ENCODE measurements at regions of chr19 and their contacts with region 1.

Region 1: DNA sequence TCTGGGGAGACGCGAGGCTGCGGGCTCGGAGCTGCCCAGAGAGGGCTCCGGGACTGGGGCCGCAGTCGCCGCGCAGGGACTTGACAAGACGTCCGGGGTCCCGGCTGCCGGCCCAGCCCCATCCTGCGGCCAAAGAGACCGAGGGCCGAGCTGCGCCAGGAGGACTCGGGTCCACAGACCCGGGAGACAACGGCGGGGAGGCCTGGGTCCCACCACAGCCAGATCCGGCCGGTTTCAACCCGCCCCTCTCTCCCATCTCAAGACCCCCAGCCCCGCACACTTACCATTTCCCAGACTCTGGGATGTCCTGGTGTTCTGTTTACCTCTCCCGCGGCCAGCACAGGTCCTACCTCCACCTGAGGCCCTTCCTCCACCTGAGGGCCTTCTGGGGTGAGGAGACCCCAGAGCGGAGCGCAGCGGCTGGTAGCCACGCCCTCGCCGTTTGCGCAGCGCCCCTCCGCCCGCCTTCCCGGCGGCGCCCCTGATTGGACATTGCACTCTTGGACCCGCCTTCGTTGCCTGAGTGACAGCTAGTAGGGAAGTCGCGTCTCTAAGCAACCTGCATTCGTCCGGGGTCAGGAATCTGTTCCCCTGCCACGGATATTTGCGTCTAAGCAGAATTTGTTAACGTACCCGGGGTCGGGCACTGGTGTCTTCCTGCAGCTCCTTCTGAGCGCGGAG is at the start of gene ZNF709:
- DNase-seq: peak; percentile 92
- ATAC-seq: peak; percentile 100
- H3K4me3 Mint-ChIP-seq: peak within 1 kb of the TSS; percentile 90
- H3K27ac Mint-ChIP-seq: peak within 1 kb of the TSS; percentile 86
- H3K4me1 Mint-ChIP-seq: peaks cover 25% of the 10 kb centered on the region
- H3K27me3 Mint-ChIP-seq: no peaks in the 10 kb centered on the region
- total RNA-seq, gene ZNF709: 1.4 to 1.9 TPM

Region 2: GRCh38 chr19:12346896-12347295 is 137.6 kb before region 1 on chr19:
- CTCF ChIA-PET with region 1: no interaction called
- DNase-seq: no peak
- ATAC-seq: no peak
- H3K4me3 Mint-ChIP-seq: no peak overlapping the region
- H3K27ac Mint-ChIP-seq: no peak overlapping the region
- H3K4me1 Mint-ChIP-seq: no peaks in the 10 kb centered on the region
- H3K27me3 Mint-ChIP-seq: no peaks in the 10 kb centered on the region

Region 3: DNA sequence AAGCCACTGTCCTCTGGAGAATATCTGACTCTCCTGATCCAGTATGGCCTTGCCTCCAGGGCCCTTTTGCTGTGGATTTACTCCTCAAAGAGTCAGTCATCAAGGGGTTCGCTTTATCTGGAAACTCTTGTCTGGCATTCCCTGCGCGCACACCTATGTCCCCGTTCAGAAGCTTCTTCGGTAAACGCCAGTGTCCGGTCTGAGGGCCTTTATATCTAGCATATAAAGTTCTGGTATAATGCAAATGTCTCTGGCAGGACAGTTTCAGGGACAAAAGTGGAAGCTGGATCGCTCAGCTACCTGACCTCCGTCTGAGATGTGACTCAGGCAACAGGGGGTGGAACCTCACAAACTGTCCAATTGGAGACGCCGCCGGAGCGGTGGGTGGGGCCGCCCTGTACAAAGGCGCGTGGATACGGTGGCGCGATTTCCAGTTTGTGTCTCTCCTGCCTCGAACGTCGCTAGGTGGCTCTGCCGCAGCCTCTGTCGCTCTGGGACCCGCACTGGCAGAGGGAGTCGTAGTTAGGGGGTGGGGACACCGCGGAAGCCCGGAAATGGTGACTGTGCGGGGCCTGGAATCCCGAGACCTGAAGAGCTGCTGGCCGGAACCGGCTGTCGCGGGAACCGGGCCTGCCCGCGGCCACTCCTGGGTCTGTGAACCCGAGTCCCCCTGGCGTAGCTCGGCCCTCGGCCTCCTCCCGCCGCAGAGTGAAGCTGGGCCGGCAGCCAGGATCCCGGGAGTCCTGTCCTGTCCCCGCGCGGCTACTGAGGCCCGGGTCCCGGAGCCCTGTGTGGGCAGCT is 10.7 kb after region 1 on chr19:
- CTCF ChIA-PET with region 1: interaction called, 10 read pairs
- DNase-seq: peak; percentile 96
- ATAC-seq: peak; percentile 100
- H3K4me3 Mint-ChIP-seq: peak overlapping the region; percentile 79
- H3K27ac Mint-ChIP-seq: peak overlapping the region; percentile 85
- H3K4me1 Mint-ChIP-seq: peaks cover 14% of the 10 kb centered on the region
- H3K27me3 Mint-ChIP-seq: no peaks in the 10 kb centered on the region

Region 4: DNA sequence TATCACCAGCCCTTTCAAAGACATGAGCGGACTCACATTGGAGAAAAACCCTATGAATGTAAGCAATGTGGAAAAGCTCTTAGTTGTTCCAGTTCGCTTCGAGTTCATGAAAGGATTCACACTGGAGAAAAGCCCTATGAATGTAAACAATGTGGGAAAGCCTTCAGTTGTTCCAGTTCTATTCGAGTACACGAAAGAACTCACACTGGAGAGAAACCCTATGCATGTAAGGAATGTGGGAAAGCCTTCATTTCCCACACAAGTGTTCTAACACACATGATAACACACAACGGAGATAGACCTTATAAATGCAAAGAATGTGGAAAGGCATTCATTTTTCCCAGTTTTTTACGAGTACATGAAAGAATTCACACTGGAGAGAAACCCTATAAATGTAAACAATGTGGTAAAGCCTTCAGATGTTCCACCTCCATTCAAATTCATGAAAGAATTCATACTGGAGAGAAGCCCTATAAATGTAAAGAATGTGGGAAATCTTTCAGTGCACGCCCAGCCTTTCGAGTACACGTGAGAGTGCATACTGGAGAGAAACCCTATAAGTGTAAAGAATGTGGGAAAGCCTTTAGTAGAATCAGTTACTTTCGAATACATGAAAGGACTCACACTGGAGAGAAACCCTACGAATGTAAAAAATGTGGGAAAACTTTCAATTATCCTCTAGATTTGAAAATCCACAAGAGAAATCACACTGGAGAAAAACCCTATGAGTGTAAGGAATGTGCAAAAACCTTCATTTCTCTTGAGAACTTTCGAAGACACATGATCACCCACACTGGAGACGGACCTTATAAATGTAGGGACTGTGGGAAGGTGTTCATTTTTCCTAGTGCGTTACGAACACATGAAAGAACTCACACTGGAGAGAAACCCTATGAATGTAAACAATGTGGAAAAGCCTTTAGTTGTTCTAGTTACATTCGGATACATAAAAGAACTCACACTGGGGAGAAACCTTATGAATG is 143.8 kb after region 1 on chr19:
- CTCF ChIA-PET with region 1: no interaction called
- DNase-seq: no peak
- ATAC-seq: no peak
- H3K4me3 Mint-ChIP-seq: no peak overlapping the region
- H3K27ac Mint-ChIP-seq: no peak overlapping the region
- H3K4me1 Mint-ChIP-seq: no peaks in the 10 kb centered on the region
- H3K27me3 Mint-ChIP-seq: no peaks in the 10 kb centered on the region

Measured in activated CD8-positive, alpha-beta memory T cell treated with anti-CD3 and anti-CD28 coated beads, Interleukin-2, amount 10 ng/mL, durations not matched to agents 7 days and 5 days (primary cell).